ENCODE measurements at regions of chr3 and their contacts with region 1.

Region 1: GRCh38 chr3:188339410-188340295 is 185.7 kb downstream of the LPP start:
- DNase-seq: peak; percentile 76
- H3K4me3 Mint-ChIP-seq: peak overlapping the region; percentile 59
- H3K27ac Mint-ChIP-seq: peak overlapping the region; percentile 92
- H3K4me1 Mint-ChIP-seq: peaks cover 34% of the 10 kb centered on the region
- H3K27me3 Mint-ChIP-seq: no peaks in the 10 kb centered on the region

Region 2: GRCh38 chr3:188286087-188286513 is 53.6 kb before region 1 on chr3:
- CTCF ChIA-PET with region 1: no interaction called
- intact Hi-C with region 1: loop called (anchors 1 kb)
- DNase-seq: peak; percentile 32
- H3K4me3 Mint-ChIP-seq: no peak overlapping the region
- H3K27ac Mint-ChIP-seq: no peak overlapping the region
- H3K4me1 Mint-ChIP-seq: peaks cover 45% of the 10 kb centered on the region
- H3K27me3 Mint-ChIP-seq: no peaks in the 10 kb centered on the region

Region 3: DNA sequence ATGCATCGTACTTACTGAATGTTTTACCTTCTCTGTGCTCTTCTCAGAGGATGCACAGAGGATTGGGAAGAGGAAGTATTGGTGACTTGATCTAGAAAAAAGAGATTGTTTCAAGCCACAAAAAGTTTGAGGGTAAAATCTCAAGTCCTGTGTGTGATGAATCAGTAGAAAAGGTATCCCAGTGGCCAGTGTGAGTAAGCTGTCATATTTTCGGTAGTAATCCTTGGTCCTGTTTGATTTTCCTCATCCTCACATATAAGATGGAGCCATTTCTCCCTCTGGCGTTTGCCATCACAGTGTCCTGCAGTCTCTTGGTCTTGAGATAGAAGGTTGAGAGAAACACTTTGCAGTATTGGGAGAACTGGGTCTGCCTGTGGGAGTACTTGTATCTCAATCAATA is 18.9 kb before region 1 on chr3:
- CTCF ChIA-PET with region 1: no interaction called
- intact Hi-C with region 1: loop called (anchors 1 kb)
- DNase-seq: no peak
- H3K4me3 Mint-ChIP-seq: no peak overlapping the region
- H3K27ac Mint-ChIP-seq: no peak overlapping the region
- H3K4me1 Mint-ChIP-seq: peaks cover 49% of the 10 kb centered on the region
- H3K27me3 Mint-ChIP-seq: no peaks in the 10 kb centered on the region

Region 4: GRCh38 chr3:188400494-188401243 is 61.0 kb after region 1 on chr3:
- CTCF ChIA-PET with region 1: interaction called, 3 read pairs
- intact Hi-C with region 1: loop called (anchors 1 kb)
- DNase-seq: peak; percentile 60
- H3K4me3 Mint-ChIP-seq: no peak overlapping the region
- H3K27ac Mint-ChIP-seq: peak overlapping the region; percentile 43
- H3K4me1 Mint-ChIP-seq: peaks cover 70% of the 10 kb centered on the region
- H3K27me3 Mint-ChIP-seq: no peaks in the 10 kb centered on the region

Region 5: DNA sequence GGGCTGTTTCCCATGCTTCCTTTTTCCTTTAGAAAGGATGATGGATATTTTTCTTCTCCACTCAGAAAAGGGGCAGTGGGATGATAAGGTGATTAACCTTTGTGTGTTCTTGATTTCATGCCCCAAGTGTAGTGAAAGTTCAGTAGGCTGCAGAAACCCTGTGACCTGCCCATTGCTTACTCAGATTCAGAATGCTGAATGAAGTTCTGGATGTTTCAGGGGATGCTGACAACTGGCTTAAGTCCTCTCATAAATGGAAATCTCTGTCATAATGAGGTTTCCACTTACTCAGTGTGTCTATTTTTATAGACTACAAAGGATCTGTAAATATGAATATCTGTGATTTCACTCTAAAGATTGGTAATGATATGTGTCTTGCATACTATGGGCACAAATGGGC is 360.8 kb after region 1 on chr3:
- CTCF ChIA-PET with region 1: no interaction called
- intact Hi-C with region 1: loop called (anchors 1 kb)
- DNase-seq: peak; percentile 52
- H3K4me3 Mint-ChIP-seq: no peak overlapping the region
- H3K27ac Mint-ChIP-seq: no peak overlapping the region
- H3K4me1 Mint-ChIP-seq: peaks cover 30% of the 10 kb centered on the region
- H3K27me3 Mint-ChIP-seq: no peaks in the 10 kb centered on the region